AG04449 (cell line): ENCODE measurements at regions of chr4 and their contacts with region 1.

Region 1: DNA sequence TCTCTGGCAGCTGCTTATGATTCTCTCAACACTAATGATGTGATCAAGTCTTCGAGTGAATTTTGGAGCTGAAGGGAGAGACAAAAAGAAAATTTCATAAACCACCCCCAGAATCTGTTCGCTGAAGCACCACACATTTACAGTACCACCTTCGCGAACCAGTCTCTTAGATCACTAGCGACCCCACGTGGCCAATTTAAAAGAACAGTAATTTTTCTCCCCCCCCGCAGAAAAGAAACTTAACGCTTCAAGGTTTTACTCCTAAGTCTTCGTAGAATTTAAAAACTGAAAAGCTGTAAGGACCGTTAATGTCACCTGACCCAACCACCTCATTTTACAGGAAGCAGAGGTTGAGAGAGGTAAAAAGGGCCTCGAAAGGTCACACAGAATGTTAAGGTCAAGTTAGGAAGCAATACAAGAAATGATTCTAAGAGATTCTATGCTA is 187.5 kb downstream of the QDPR start:
- DNase-seq: peak; percentile 9
- H3K4me3 ChIP-seq: no peak overlapping the region
- CTCF ChIP-seq: peak; percentile 46

Region 2: GRCh38 chr4:16289897-16290554 is 1034.4 kb before region 1 on chr4:
- CTCF ChIA-PET with region 1: interaction called, 23 read pairs
- POLR2A ChIA-PET with region 1: no interaction called
- DNase-seq: peak; percentile 12
- H3K4me3 ChIP-seq: no peak overlapping the region
- CTCF ChIP-seq: peak; percentile 28

Region 3: DNA sequence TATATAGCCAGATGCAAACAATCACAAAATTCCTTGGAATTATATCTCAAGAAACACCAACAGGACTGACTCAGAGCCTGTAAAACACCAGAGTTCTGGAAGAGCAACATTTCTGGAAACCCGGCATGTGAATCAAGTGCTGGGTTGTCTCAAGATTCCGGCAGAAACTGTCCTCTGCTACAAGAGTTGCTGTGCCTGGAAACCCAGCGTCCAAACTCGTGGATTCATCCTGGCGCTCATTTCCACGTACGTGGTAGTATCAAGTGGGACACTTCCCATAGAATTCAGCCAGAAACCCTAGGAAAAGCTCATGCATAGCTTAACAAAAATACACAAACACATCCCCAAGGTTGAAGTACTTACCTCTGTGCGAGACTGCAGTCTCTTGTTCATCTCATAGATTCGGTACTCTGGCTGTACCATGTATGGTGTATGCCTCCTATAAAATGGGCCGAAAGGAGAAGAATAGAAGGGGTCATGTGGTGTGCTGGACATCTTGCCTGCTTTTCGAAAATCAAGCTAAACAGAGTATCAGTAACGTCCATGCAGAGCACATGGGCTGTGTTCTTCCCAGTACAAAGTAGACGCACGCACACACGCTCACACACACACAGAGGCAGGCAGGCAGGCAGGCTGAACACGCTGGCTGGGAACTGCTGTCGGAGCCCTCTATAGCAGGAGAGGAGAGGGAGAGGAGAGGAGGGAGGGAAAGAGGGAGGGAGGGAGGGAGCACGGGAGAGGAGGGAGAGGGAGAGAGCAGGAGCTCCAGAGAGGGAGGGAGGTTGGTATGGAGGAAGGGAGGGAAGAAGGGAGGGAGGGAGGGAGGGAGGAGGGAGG is 426.2 kb before region 1 on chr4 and contains the start of gene LDB2:
- CTCF ChIA-PET with region 1: interaction called, 14 read pairs
- POLR2A ChIA-PET with region 1: no interaction called
- DNase-seq: peak; percentile 58
- H3K4me3 ChIP-seq: peak within 1 kb of the TSS; percentile 71
- CTCF ChIP-seq: no peak

Region 4: DNA sequence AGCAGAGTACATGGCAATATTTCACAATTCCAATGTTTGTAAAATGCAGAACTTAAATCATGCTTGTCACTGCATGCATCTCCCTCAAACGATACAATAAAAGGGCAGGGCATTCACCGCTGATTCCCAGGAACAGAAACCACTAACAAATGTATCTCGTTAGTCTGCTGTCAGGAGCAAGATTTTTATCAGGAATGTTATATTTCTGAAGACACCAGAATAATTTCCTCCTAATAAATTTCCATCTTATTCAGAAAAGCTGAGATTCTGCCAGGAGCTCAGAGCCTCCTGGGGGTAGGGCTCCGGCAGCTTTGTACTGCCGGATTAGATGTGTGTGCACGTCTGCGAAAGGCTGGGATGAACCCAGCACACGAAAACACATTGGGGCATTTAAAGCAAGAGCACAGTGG is 371.9 kb before region 1 on chr4:
- CTCF ChIA-PET with region 1: interaction called, 13 read pairs
- POLR2A ChIA-PET with region 1: no interaction called
- DNase-seq: no peak
- H3K4me3 ChIP-seq: peak overlapping the region; percentile 0
- CTCF ChIP-seq: no peak

Region 5: DNA sequence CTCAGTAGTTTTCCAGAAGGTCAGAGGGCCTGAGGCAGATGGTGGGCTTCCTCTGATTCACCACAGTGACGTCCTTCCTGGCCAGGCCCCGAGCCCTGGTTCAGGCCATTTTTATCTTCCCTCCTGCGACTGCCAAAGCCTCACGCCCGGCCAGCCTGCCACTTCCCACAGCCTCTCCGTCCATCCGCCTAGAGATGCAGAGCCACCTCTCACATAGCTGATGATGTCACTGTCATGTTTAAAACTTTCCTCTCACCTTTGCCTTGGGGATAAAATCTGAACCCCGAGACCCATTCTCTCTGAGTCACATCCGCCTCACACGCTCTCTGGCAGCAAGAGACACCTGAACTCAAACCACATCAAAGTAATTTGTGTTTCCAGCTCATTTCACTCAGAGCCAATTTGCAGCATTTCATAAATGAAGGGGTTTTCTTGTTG is 12.1 kb after region 1 on chr4:
- CTCF ChIA-PET with region 1: interaction called, 11 read pairs
- POLR2A ChIA-PET with region 1: no interaction called
- DNase-seq: no peak
- H3K4me3 ChIP-seq: no peak overlapping the region
- CTCF ChIP-seq: no peak

Region 6: DNA sequence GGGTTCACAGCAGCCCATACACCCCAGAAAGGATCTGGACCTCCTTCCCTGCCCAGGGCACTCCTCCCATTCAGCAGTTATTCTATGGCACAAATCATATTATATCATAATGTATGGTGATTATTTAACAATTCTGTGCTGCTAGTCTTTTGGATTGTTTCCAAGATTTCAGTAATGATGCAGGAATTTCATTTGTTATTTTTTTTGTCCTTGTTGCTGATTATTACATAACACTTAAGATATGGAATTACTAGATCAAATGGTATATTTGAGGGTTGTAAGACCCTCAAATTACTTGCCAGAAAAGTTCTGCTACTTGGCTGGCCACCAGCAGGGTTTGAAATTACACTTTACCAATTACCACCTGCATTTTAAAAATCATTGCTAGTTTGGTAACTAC is 151.1 kb after region 1 on chr4:
- CTCF ChIA-PET with region 1: interaction called, 11 read pairs
- POLR2A ChIA-PET with region 1: no interaction called
- DNase-seq: no peak
- H3K4me3 ChIP-seq: no peak overlapping the region
- CTCF ChIP-seq: no peak